B cell (primary cell): ENCODE measurements at regions of chr10 and their contacts with region 1.

Region 1: GRCh38 chr10:74589226-74589673 is 237.2 kb upstream of the KAT6B start:
- DNase-seq: peak; percentile 77
- ATAC-seq: peak; percentile 73
- H3K4me3 ChIP-seq: no peak overlapping the region
- H3K4me3 Mint-ChIP-seq: peak overlapping the region; percentile 21
- H3K27ac ChIP-seq: peak overlapping the region in 1 of 2 donors; percentile 28
- H3K27ac Mint-ChIP-seq: peak overlapping the region; percentile 74
- H3K4me1 ChIP-seq: peaks cover 23 to 27% of the 10 kb centered on the region in 2 donors
- H3K4me1 Mint-ChIP-seq: peaks cover 49% of the 10 kb centered on the region
- H3K27me3 ChIP-seq: no peaks in the 10 kb centered on the region
- H3K27me3 Mint-ChIP-seq: no peaks in the 10 kb centered on the region
- CTCF ChIP-seq: no peak

Region 2: DNA sequence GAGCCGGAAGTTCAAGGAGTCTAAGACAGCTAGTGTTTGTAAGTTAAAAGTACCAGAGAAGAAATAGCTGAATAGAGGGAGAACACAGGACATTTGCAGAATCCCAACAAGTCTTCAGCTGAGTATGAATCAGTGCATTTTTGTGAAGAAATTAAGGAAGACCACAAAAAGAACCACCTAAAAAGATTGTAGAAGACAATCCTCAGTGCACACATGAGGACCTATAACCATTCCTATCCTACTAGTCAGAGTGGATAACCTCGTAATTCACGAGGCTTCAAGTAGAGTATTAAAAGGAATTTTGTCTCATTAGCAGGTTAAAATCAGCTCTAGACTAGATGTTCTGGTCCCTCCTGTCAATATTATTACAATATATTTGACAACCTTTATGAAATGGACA is 58.3 kb before region 1 on chr10:
- CTCF ChIA-PET with region 1: interaction called, 3 read pairs
- POLR2A ChIA-PET with region 1: no interaction called
- intact Hi-C with region 1: loop called (anchors 10 kb)
- DNase-seq: no peak
- ATAC-seq: no peak
- H3K4me3 ChIP-seq: no peak overlapping the region
- H3K4me3 Mint-ChIP-seq: no peak overlapping the region
- H3K27ac ChIP-seq: no peak overlapping the region
- H3K27ac Mint-ChIP-seq: no peak overlapping the region
- H3K4me1 ChIP-seq: peaks cover 0 to 3% of the 10 kb centered on the region in 2 donors
- H3K4me1 Mint-ChIP-seq: peaks cover 6% of the 10 kb centered on the region
- H3K27me3 ChIP-seq: no peaks in the 10 kb centered on the region
- H3K27me3 Mint-ChIP-seq: no peaks in the 10 kb centered on the region
- CTCF ChIP-seq: no peak

Region 3: GRCh38 chr10:74677951-74678350 is 88.7 kb after region 1 on chr10:
- CTCF ChIA-PET with region 1: no interaction called
- POLR2A ChIA-PET with region 1: no interaction called
- intact Hi-C with region 1: no loop called
- DNase-seq: peak; percentile 17
- ATAC-seq: peak; percentile 72
- H3K4me3 ChIP-seq: no peak overlapping the region
- H3K4me3 Mint-ChIP-seq: no peak overlapping the region
- H3K27ac ChIP-seq: no peak overlapping the region
- H3K27ac Mint-ChIP-seq: peak overlapping the region; percentile 26
- H3K4me1 ChIP-seq: peaks cover 2 to 4% of the 10 kb centered on the region in 2 donors
- H3K4me1 Mint-ChIP-seq: peaks cover 27% of the 10 kb centered on the region
- H3K27me3 ChIP-seq: no peaks in the 10 kb centered on the region
- H3K27me3 Mint-ChIP-seq: no peaks in the 10 kb centered on the region
- CTCF ChIP-seq: no peak

Region 4: GRCh38 chr10:76086761-76087639 is 1497.8 kb after region 1 on chr10:
- CTCF ChIA-PET with region 1: no interaction called
- POLR2A ChIA-PET with region 1: no interaction called
- intact Hi-C with region 1: no loop called
- DNase-seq: no peak
- ATAC-seq: no peak
- H3K4me3 ChIP-seq: no peak overlapping the region
- H3K4me3 Mint-ChIP-seq: no peak overlapping the region
- H3K27ac ChIP-seq: no peak overlapping the region
- H3K27ac Mint-ChIP-seq: no peak overlapping the region
- H3K4me1 ChIP-seq: no peaks in the 10 kb centered on the region
- H3K4me1 Mint-ChIP-seq: no peaks in the 10 kb centered on the region
- H3K27me3 ChIP-seq: no peaks in the 10 kb centered on the region
- H3K27me3 Mint-ChIP-seq: peaks cover 3% of the 10 kb centered on the region
- CTCF ChIP-seq: no peak